Activated CD4-positive, alpha-beta T cell treated with anti-CD3 and anti-CD28 coated beads for 36 hours (primary cell): ENCODE measurements at regions of chr15 and their contacts with region 1.

Region 1: DNA sequence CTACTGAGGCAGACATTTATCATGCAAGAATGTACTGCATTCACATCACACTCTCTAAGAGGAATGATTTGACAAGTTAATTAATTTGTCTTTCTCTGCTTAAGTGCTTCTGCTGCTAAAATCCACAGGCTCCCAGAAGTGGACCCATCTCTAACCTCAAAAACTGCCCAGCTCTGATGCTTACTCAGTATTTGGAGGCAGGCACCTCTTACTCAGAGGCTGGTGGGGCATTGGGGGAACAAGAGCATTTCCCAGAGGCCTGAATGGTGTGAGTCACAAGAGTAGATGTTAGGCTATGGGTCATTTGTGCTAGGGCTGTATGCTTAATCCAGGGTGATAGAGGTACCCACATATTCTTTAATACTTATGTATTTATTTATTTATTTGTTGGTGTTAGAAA is 34.4 kb upstream of the HCN4 start:
- DNase-seq: no peak
- ATAC-seq: no peak
- H3K4me3 Mint-ChIP-seq: no peak overlapping the region
- H3K27ac Mint-ChIP-seq: no peak overlapping the region
- H3K4me1 Mint-ChIP-seq: no peaks in the 10 kb centered on the region
- H3K27me3 Mint-ChIP-seq: peaks cover 9% of the 10 kb centered on the region

Region 2: GRCh38 chr15:73265536-73266153 is 137.5 kb before region 1 on chr15:
- CTCF ChIA-PET with region 1: no interaction called
- POLR2A ChIA-PET with region 1: no interaction called
- intact Hi-C with region 1: no loop called
- DNase-seq: peak; percentile 72
- ATAC-seq: peak; percentile 87
- H3K4me3 Mint-ChIP-seq: no peak overlapping the region
- H3K27ac Mint-ChIP-seq: no peak overlapping the region
- H3K4me1 Mint-ChIP-seq: peaks cover 3% of the 10 kb centered on the region
- H3K27me3 Mint-ChIP-seq: no peaks in the 10 kb centered on the region

Region 3: GRCh38 chr15:73660455-73660854 is 257.3 kb after region 1 on chr15:
- CTCF ChIA-PET with region 1: no interaction called
- POLR2A ChIA-PET with region 1: interaction called, 10 read pairs
- intact Hi-C with region 1: no loop called
- DNase-seq: no peak
- ATAC-seq: no peak
- H3K4me3 Mint-ChIP-seq: no peak overlapping the region
- H3K27ac Mint-ChIP-seq: no peak overlapping the region
- H3K4me1 Mint-ChIP-seq: peaks cover 3% of the 10 kb centered on the region
- H3K27me3 Mint-ChIP-seq: peaks cover 28% of the 10 kb centered on the region